ENCODE measurements at regions of chr11 and their contacts with region 1.

Region 1: GRCh38 chr11:62427630-62428233 is 8.9 kb downstream of the SCGB1A1 start:
- DNase-seq: peak; percentile 38
- CTCF ChIP-seq: no peak

Region 2: DNA sequence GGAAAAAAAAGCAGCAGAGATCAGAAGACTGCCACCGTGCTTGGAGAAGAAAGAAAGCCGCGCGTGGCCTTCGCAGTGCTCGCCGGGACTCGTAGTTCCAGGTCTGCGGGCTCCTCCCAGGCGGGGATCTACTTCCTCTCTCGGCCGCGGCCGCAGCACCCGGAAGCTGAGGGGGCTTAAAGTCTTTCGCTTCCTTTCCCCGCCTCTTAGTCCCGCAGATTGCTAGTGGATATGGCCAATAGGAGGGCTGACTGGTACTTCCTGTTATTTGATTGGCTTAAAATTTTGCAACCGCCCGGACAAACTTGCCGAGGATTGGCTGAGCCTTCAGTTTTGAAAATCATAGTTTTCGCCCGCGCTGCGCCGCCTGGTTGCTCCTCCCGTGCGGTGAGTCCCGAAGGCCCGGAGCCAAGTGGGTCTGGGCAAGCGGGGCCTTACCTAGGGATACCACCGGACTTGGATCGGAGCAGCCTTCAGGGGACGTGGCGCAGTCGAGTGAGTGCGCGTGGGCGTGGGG is 304.0 kb before region 1 on chr11 and contains the start of gene INCENP:
- CTCF ChIA-PET with region 1: no interaction called
- POLR2A ChIA-PET with region 1: no interaction called
- DNase-seq: peak; percentile 96
- CTCF ChIP-seq: no peak

Region 3: DNA sequence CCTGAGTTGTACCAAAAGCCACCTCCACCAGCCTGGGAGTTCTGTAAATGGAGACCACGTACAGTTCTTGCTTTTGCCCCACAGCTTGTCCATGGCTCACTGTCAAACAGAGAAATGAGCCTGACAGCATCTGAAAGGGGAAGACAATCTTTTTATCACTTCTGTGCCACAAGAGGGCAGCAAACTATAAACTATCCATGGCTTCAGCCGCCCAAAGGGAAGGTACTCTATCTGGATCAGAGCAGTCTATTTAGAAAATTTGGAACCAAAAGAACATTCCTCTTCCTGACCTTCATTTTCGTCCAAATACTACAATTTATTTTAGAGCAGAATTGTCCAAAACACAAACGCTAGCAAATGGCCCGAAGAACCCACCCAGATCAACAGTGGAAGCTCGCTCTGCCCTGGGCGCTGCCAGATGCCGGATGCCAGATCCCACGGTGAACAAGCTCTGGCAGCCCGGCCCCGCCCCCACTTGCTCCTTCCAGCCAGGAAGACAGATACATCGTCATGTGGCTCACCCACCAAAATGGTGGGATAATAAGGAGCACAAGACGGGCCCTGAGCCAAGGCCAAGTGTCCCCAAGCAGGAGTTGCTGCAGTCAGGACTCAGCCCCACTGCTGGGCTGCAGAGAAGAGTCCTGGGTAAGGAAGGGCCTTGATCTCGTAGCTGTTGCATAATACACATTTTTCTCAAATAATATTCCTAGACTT is 32.8 kb before region 1 on chr11:
- CTCF ChIA-PET with region 1: interaction called, 34 read pairs
- POLR2A ChIA-PET with region 1: no interaction called
- DNase-seq: peak; percentile 81
- CTCF ChIP-seq: peak; percentile 64

Region 4: GRCh38 chr11:62400760-62401159 is 27.0 kb before region 1 on chr11:
- CTCF ChIA-PET with region 1: interaction called, 34 read pairs
- POLR2A ChIA-PET with region 1: no interaction called
- DNase-seq: no peak
- CTCF ChIP-seq: no peak

Region 5: DNA sequence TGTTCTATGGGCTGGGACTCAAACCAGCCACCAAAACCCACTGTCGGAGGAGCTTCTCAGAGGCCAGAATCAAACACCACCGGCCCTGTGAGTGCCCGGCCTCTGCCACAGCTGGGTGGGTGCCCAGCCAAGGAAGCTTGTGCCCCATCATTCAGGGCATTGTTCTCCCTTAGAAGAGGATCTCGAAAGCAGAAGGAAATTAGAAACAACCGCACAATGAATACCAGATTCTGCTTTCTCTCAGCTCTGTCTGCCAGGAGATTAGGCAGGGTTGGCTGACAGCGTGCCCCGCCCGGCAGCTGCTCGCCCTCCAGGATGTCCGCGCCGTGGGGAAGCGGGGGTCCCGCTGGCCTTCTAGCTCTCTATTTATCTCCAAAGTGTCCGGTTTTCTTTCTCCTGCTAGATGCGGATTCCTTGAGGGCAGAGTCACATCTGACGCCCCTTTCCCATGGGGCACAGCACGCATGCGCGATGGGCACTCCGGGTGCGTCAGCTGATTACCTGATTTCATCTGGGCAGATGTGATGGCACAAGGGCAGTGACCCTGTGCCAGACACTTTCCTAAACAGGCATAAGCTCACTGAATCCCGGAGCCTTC is 16.6 kb after region 1 on chr11:
- CTCF ChIA-PET with region 1: interaction called, 17 read pairs
- POLR2A ChIA-PET with region 1: no interaction called
- DNase-seq: peak; percentile 57
- CTCF ChIP-seq: no peak

Region 6: GRCh38 chr11:62458212-62459002 is 30.7 kb after region 1 on chr11:
- CTCF ChIA-PET with region 1: interaction called, 15 read pairs
- POLR2A ChIA-PET with region 1: no interaction called
- DNase-seq: no peak
- CTCF ChIP-seq: no peak

Region 7: DNA sequence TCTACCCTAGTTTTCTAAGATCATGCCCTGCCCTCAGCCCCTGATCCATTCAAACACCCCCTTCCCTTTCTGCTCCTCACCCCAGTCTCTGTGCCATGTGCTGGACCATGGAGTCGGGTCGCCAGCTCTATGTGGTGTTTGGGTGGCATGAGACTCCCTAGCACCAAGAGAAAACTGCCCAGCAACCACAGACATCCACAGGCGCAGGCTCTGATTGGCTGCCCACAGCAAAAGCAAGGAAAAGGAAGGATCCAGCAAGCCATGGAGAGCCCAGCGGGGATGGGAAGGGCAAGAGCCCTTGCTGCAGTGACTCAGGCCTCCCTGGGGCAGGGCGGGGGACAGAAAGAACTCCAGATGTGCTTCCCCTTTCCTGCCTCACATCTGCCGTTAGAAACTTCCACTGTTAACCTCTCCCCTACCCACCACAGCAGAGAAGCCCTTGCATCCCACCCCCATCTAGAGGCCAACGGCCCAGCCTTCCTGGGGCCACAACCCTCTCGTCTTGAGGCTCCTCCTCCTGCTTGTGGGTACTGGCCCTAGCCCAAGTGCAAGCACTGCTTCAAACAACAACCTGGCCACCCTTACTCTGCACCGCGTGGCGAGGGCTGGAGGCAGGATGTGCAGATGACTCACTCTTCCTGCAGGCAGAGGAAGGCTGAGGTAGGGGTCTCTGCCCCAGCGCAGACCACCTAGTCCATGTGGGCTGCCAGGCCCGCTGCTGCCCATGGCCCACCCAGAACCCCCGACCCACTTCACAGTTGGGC is 128.6 kb after region 1 on chr11:
- CTCF ChIA-PET with region 1: interaction called, 65 read pairs
- POLR2A ChIA-PET with region 1: no interaction called
- DNase-seq: peak; percentile 70
- CTCF ChIP-seq: no peak

Measured in GM10248 (cell line).